Naive thymus-derived CD4-positive, alpha-beta T cell (primary cell): ENCODE measurements at regions of chr5 and their contacts with region 1.

Region 1: GRCh38 chr5:53425598-53426511 is 54.6 kb upstream of the FST start:
- DNase-seq: peak in 2 of 9 donors; percentile 6 to 11
- ATAC-seq: peak; percentile 34
- H3K4me3 ChIP-seq: no peak overlapping the region
- H3K4me3 Mint-ChIP-seq: no peak overlapping the region
- H3K27ac ChIP-seq: no peak overlapping the region
- H3K27ac Mint-ChIP-seq: no peak overlapping the region
- H3K4me1 ChIP-seq: no peaks in the 10 kb centered on the region
- H3K4me1 Mint-ChIP-seq: no peaks in the 10 kb centered on the region
- H3K27me3 ChIP-seq: no peaks in the 10 kb centered on the region
- H3K27me3 Mint-ChIP-seq: peaks cover 14 to 40% (median 35%) of the 10 kb centered on the region in 5 donors

Region 2: DNA sequence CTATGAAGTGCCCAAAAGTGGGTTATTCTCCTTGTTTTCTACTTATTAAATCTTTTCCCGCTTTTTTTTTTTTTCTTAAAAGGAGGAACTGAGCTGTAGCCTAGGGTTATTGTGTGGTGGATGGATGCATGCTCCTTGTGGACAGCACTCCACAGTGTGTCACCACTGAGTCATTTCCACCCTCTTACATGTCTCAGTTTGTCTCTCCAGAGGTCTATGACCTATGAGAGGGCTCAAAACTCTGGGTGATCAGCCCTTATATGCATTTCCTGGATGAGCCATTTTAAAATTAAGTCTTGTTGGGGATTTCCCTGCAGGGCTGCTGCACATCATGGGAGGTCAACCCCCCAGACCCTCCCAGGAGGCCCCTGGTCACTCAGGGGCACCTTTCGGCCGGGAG is 214.1 kb before region 1 on chr5:
- CTCF ChIA-PET with region 1: no interaction called
- POLR2A ChIA-PET with region 1: no interaction called
- intact Hi-C with region 1: no loop called
- DNase-seq: no peak
- ATAC-seq: no peak
- H3K4me3 ChIP-seq: no peak overlapping the region
- H3K4me3 Mint-ChIP-seq: no peak overlapping the region
- H3K27ac ChIP-seq: no peak overlapping the region
- H3K27ac Mint-ChIP-seq: no peak overlapping the region
- H3K4me1 ChIP-seq: no peaks in the 10 kb centered on the region
- H3K4me1 Mint-ChIP-seq: no peaks in the 10 kb centered on the region
- H3K27me3 ChIP-seq: peaks cover 0 to 4% of the 10 kb centered on the region in 2 donors
- H3K27me3 Mint-ChIP-seq: peaks cover 2 to 26% (median 15%) of the 10 kb centered on the region in 5 donors

Region 3: GRCh38 chr5:54217826-54218503 is 792.1 kb after region 1 on chr5:
- CTCF ChIA-PET with region 1: no interaction called
- POLR2A ChIA-PET with region 1: no interaction called
- intact Hi-C with region 1: loop called (anchors 1 to 5 kb)
- DNase-seq: peak in 3 of 9 donors; percentile 8 to 37 (median 28)
- ATAC-seq: peak; percentile 51
- H3K4me3 ChIP-seq: no peak overlapping the region
- H3K4me3 Mint-ChIP-seq: no peak overlapping the region
- H3K27ac ChIP-seq: no peak overlapping the region
- H3K27ac Mint-ChIP-seq: no peak overlapping the region
- H3K4me1 ChIP-seq: no peaks in the 10 kb centered on the region
- H3K4me1 Mint-ChIP-seq: peaks cover 0 to 23% (median 10%) of the 10 kb centered on the region in 7 donors
- H3K27me3 ChIP-seq: no peaks in the 10 kb centered on the region
- H3K27me3 Mint-ChIP-seq: peaks cover 0 to 2% (median 0%) of the 10 kb centered on the region in 5 donors